ENCODE measurements at regions of chr12 and their contacts with region 1.

Region 1: DNA sequence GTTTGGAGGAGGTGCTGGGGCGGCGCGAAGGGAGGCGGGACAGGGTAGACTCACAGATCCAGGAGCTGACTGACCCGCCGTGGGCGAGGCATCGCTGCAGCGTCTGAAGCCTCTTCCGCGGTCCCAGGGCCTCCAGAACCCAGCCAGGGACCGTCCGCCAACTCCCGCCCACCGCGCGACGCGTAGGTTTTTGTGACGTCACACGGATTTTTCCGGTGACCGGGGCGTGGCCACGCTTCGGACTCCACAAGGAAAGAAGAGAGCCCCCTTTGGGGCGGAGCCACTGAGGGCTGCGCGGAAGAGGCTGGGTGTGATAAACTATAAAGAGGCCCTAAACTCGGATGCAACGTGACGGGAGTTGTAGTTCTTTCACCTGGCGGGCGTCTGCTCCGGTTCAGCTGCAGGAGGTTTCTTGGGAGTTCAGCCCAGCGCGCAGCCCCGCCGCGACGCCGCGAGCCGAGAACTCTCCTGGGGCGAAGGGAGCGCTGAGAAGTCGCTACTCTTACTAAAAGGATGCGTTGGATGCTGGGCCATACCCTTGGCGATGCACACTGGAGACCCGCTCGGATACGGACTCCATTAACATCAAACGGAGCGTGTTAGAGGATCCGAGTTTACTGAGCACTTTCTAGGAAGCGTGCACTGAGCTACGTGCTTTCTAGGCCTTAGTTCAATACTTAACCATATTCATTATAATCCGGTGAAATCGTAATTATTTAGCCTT is at the start of gene AMN1:
- DNase-seq: peak; percentile 99
- ATAC-seq: peak; percentile 97
- H3K4me3 Mint-ChIP-seq: peak within 1 kb of the TSS; percentile 95
- H3K27ac Mint-ChIP-seq: peak within 1 kb of the TSS; percentile 98
- H3K4me1 Mint-ChIP-seq: peaks cover 28% of the 10 kb centered on the region
- H3K27me3 Mint-ChIP-seq: no peaks in the 10 kb centered on the region
- total RNA-seq, gene AMN1: 5.9 to 7.3 TPM

Region 2: DNA sequence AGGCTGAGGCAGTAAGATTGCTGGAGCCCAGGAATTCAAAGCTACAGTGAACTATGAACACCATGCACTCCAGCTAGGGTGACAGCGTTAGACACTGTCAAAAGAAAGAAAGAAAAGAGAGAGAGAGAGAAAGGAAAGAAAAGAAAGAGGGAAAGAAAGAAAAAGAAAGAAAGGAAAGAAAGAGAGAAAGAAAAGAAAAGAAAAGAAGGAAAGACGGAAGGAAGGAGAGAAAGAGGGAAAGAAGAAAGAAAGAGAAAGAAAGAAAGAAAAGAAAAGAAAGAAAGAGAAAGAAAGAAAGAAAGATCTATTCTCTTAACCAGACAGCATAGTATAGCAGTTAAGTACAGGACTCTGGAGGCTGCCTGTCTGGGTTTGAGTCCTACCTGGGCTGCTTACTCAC is 116.3 kb before region 1 on chr12:
- POLR2A ChIA-PET with region 1: no interaction called
- DNase-seq: no peak
- ATAC-seq: no peak
- H3K4me3 Mint-ChIP-seq: no peak overlapping the region
- H3K27ac Mint-ChIP-seq: no peak overlapping the region
- H3K4me1 Mint-ChIP-seq: no peaks in the 10 kb centered on the region
- H3K27me3 Mint-ChIP-seq: no peaks in the 10 kb centered on the region

Region 3: GRCh38 chr12:31659087-31659933 is 69.8 kb before region 1 on chr12 and contains the start of gene ETFBKMT:
- POLR2A ChIA-PET with region 1: interaction called, 15 read pairs
- DNase-seq: peak; percentile 93
- ATAC-seq: peak; percentile 100
- H3K4me3 Mint-ChIP-seq: peak within 1 kb of the TSS; percentile 97
- H3K27ac Mint-ChIP-seq: peak within 1 kb of the TSS; percentile 100
- H3K4me1 Mint-ChIP-seq: peaks cover 9% of the 10 kb centered on the region
- H3K27me3 Mint-ChIP-seq: no peaks in the 10 kb centered on the region
- total RNA-seq, gene ETFBKMT: 1.1 to 1.6 TPM

Region 4: DNA sequence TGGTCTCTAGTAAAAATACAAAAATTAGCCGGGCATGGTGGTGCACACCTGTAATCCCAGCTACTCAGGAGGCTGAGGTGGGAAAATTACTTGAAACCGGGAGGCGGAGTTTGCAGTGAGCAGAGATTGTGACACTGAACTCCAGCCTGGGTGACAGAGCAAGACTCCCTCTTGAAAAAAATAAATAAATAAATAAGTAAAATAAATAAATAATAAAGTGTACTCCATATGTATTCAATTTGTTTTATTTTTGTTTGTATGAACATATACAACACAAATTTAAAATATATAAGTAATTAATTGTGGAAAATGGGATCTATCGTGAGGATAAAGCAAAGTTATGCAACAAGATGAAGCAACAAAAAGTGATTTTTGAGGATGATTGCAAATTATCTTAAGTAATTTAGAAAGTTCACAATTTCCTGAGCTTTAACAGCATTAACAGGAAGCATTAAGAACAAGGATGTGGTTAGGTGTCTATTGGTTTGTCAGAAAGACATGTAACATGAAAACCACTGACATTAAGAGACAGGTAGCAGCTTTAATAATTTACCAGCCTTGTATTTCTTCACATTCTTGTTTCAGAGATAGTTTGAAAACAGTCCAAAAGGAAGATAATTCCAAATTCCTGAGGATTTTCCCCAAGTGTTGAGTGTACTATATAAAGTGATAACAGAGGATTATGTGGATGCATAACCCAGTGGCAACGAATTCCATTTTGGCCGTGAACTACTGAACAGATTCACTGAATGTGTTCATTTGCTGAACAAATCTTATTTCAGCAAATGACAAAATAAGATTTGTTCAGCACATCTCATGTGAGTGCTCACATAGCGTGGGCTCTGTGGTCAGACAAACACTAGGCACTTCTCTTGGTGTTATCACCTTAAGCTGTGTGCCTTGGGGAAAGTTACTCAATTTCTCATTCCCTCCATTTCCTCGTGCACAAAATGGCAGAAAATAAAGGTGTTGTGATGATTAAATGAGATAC is 161.5 kb after region 1 on chr12:
- POLR2A ChIA-PET with region 1: interaction called, 17 read pairs
- DNase-seq: no peak
- ATAC-seq: peak; percentile 67
- H3K4me3 Mint-ChIP-seq: peak overlapping the region; percentile 63
- H3K27ac Mint-ChIP-seq: peak overlapping the region; percentile 89
- H3K4me1 Mint-ChIP-seq: peaks cover 38% of the 10 kb centered on the region
- H3K27me3 Mint-ChIP-seq: no peaks in the 10 kb centered on the region

Region 5: DNA sequence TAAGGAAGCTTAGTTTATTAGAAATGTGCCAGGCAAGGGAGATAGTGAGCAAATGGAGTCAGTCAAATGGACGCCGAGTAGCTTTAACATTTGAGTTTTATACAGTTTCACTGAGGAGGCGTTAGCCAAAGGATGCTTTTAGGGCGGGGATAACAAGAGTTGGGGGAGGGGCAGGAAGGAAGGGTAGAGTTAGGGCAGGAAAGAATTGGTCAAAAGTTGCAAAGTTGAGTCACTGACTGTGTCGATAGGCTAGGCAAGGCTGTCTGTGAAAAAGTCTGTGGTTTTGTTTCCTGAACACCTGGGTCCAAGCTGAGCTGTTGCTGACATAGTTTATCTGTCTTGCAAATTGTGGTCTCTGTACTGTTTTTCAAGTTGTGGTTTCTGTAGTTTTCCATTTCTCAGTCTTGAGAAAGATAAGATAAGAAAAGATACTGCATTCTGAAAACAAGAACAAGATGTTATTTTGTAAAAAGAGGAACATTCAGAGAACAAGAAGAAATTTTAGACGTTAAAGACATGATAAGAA is 167.5 kb after region 1 on chr12:
- POLR2A ChIA-PET with region 1: interaction called, 17 read pairs
- DNase-seq: peak; percentile 49
- ATAC-seq: peak; percentile 98
- H3K4me3 Mint-ChIP-seq: peak overlapping the region; percentile 76
- H3K27ac Mint-ChIP-seq: peak overlapping the region; percentile 97
- H3K4me1 Mint-ChIP-seq: peaks cover 38% of the 10 kb centered on the region
- H3K27me3 Mint-ChIP-seq: no peaks in the 10 kb centered on the region

Measured in activated naive CD8-positive, alpha-beta T cell treated with anti-CD3 and anti-CD28 coated beads, Interleukin-2, amount 10 ng/mL, durations not matched to agents 7 days and 5 days (primary cell).